GM23248 (cell line): ENCODE measurements at regions of chr11 and their contacts with region 1.

Region 1: DNA sequence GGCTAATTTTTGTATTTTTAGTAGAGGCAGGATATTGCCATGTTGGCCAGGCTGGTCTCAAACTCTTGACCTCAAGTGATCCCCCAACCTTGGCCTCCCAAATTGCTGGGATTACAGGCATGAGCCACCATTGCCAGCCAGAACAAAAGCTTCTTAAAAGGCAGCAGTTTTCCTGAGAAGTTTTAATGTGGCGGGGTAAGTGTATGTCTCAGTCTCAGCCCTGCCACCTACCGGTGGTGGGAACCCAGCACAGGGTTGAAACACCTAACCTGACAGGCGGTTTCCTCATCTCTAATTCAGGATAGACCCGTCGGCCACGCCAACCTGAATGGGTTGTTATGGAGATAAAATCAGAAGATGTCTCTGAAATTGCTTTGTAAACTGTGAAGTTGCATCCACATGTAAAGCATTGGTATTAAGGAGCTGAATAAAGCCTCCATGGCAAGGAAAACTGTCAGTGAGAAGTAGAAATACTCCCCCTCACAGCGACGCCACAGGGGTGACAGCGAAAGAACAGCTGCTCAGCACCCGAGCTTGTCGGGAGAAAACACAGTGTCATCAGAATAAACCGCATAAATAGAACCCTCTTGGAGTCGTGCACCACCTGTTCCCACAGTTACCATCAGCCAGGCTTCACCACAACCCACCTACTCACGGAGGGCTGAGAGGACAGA is 165.9 kb upstream of the NCAM1 start:
- DNase-seq: peak; percentile 76
- H3K4me3 ChIP-seq: no peak overlapping the region
- H3K27ac ChIP-seq: no peak overlapping the region
- H3K4me1 ChIP-seq: no peaks in the 10 kb centered on the region
- H3K27me3 ChIP-seq: no peaks in the 10 kb centered on the region

Region 2: GRCh38 chr11:112280268-112281126 is 514.8 kb before region 1 on chr11:
- in situ Hi-C with region 1: loop called (anchors 10 kb)
- DNase-seq: peak; percentile 92
- H3K4me3 ChIP-seq: peak overlapping the region; percentile 76
- H3K27ac ChIP-seq: no peak overlapping the region
- H3K4me1 ChIP-seq: peaks cover 9% of the 10 kb centered on the region
- H3K27me3 ChIP-seq: no peaks in the 10 kb centered on the region

Region 3: GRCh38 chr11:112928136-112928535 is 132.9 kb after region 1 on chr11:
- in situ Hi-C with region 1: no loop called
- DNase-seq: no peak
- H3K4me3 ChIP-seq: no peak overlapping the region
- H3K27ac ChIP-seq: no peak overlapping the region
- H3K4me1 ChIP-seq: no peaks in the 10 kb centered on the region
- H3K27me3 ChIP-seq: peaks cover 8% of the 10 kb centered on the region; the same call in 1 of the 2 replicates